Activated CD4-positive, alpha-beta memory T cell treated with anti-CD3 and anti-CD28 coated beads for 36 hours (primary cell): ENCODE measurements at regions of chr12 and their contacts with region 1.

Region 1: GRCh38 chr12:68223083-68223747 is 2.4 kb downstream of the IL26 start:
- DNase-seq: peak; percentile 83
- H3K4me3 Mint-ChIP-seq: no peak overlapping the region
- H3K27ac Mint-ChIP-seq: no peak overlapping the region
- H3K4me1 Mint-ChIP-seq: peaks cover 17% of the 10 kb centered on the region
- H3K27me3 Mint-ChIP-seq: peaks cover 7% of the 10 kb centered on the region

Region 2: GRCh38 chr12:66929121-66929520 is 1294.1 kb before region 1 on chr12:
- CTCF ChIA-PET with region 1: no interaction called
- POLR2A ChIA-PET with region 1: no interaction called
- intact Hi-C with region 1: no loop called
- DNase-seq: peak; percentile 62
- H3K4me3 Mint-ChIP-seq: no peak overlapping the region
- H3K27ac Mint-ChIP-seq: no peak overlapping the region
- H3K4me1 Mint-ChIP-seq: peaks cover 15% of the 10 kb centered on the region
- H3K27me3 Mint-ChIP-seq: peaks cover 8% of the 10 kb centered on the region

Region 3: DNA sequence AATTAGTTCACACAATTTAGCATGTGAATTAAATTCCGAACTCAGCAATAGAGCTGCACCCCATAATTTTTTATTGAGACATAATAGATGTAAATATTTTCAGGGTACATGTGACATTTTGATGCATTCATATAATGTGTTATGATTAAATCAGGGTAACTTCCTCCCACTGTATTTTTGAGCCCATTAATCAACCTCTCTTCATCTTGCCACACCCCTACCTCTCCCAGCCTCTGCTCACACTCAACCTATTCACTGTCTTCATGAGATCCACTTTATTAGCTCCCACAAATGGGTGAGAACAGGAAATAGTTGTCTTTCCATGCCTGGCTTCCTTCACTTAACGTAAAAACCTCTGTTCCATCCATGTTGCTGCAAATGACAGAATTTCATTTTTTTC is 12.3 kb before region 1 on chr12:
- CTCF ChIA-PET with region 1: interaction called, 18 read pairs
- POLR2A ChIA-PET with region 1: no interaction called
- intact Hi-C with region 1: no loop called
- DNase-seq: no peak
- H3K4me3 Mint-ChIP-seq: no peak overlapping the region
- H3K27ac Mint-ChIP-seq: no peak overlapping the region
- H3K4me1 Mint-ChIP-seq: peaks cover 15% of the 10 kb centered on the region
- H3K27me3 Mint-ChIP-seq: peaks cover 5% of the 10 kb centered on the region

Region 4: DNA sequence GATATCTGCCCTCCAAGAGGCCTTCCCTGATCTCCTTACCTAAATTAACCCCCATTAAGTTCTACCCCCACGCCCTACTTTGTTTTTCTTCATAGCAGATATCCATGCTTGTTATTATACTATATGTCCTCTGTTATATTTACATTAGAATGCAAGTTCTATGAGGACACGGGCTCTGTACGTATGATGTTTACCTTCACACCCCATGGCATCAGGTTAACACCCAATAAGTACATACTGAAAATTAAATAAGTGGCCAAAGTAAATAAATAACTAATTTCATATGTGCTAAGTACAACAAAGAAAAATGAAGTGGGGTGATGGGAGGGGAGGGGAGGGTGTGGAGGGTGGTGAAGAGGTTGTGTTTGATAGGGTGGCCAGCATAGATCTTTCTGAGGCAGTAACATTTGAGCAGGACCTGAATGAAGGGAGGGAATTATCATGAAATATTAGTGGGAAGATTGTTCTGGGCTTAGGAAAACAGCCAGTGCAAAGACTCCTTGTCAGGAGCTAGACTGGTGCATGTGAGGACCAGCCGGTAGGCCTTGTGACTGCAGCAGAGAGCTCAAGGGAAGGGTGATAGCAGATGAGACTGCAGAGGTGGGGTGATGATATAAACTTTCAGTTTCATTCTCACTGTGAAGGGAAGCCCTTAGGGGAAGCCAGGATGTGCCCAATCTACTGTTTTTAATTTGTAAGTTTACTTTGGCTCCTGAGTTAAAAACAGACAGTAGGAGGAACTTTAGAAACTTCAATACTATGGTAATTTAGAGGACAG is 17.6 kb after region 1 on chr12:
- CTCF ChIA-PET with region 1: interaction called, 12 read pairs
- POLR2A ChIA-PET with region 1: no interaction called
- intact Hi-C with region 1: no loop called
- DNase-seq: peak; percentile 72
- H3K4me3 Mint-ChIP-seq: no peak overlapping the region
- H3K27ac Mint-ChIP-seq: peak overlapping the region; percentile 13
- H3K4me1 Mint-ChIP-seq: peaks cover 46% of the 10 kb centered on the region
- H3K27me3 Mint-ChIP-seq: peaks cover 12% of the 10 kb centered on the region

Region 5: DNA sequence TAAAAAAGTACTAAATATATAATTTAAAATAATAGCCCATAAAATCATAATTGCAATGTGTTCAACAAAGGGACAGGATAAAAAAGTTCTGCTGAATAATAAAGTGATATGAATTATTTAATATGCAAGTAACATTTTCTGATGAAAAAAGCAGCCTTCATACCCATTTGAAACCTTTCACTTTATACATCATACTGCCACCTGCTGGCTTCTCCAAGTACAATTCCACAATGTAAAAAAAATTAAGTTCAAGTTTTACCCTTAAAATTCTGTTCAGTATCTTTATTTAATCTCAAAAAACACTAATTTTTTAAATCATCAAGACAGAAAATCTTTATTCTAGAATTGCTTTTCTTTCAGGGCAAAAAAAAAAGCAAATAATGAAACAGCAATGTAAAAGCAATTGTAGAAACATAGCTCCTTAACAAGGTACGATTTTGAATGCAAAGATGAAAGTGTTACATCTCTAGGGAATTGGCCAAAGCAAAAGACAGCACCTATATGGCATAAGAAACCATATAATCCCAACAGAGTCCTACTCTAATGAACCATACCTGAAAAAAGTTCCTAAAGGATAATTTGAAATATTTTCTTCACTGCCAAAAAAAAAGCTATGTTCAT is 93.9 kb after region 1 on chr12:
- CTCF ChIA-PET with region 1: interaction called, 174 read pairs
- POLR2A ChIA-PET with region 1: interaction called, 3 read pairs
- intact Hi-C with region 1: loop called (anchors 1 kb)
- DNase-seq: peak; percentile 37
- H3K4me3 Mint-ChIP-seq: no peak overlapping the region
- H3K27ac Mint-ChIP-seq: no peak overlapping the region
- H3K4me1 Mint-ChIP-seq: no peaks in the 10 kb centered on the region
- H3K27me3 Mint-ChIP-seq: no peaks in the 10 kb centered on the region

Region 6: DNA sequence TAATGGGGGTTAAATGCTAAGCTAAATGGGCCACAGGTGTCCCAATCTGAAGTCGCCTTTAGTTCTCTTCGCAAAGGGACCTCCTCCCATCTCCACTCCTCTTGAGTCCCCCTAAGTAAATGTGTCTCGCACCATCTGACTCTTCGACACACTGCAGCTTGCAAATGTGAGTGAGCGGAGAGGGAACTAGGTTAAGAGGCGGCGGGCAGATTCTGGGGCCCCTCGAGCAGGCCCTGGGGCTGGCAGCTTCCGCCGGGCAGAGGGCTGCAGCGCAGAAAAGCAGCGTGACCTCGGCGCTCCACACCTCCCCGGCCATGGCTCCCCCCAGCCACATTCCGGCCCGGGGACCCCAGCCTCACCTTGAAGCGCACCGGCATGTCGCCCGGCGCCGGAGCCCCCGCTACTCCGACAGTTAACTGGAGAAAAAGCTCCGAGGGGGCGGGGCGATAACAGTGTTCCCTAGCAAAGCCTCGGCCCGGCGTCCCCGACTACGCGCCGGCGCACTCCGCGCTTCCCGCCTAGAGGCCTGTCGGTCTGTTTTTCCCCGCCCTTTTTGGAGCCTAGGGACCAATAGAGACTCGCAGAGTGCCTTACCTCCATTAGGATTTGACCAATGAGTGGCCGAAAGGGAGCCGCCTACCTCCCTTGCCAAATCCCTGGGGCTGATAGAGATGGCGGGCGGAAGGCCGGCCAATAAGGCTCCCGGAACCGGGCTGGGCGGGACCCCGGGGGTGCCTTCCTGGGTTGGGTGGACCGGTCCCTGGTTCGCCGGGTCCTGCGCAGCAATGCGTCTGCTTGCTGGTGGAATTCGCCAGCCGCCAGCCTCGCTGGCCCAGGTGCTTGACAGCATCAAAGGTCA is 108.9 kb after region 1 on chr12 and contains the start of gene MDM1:
- CTCF ChIA-PET with region 1: interaction called, 16 read pairs
- POLR2A ChIA-PET with region 1: interaction called, 4 read pairs
- intact Hi-C with region 1: no loop called
- DNase-seq: peak; percentile 97
- H3K4me3 Mint-ChIP-seq: peak within 1 kb of the TSS; percentile 85
- H3K27ac Mint-ChIP-seq: peak within 1 kb of the TSS; percentile 71
- H3K4me1 Mint-ChIP-seq: peaks cover 31% of the 10 kb centered on the region
- H3K27me3 Mint-ChIP-seq: peaks cover 2% of the 10 kb centered on the region
- total RNA-seq, gene MDM1: 13.8 to 15.6 TPM

Region 7: DNA sequence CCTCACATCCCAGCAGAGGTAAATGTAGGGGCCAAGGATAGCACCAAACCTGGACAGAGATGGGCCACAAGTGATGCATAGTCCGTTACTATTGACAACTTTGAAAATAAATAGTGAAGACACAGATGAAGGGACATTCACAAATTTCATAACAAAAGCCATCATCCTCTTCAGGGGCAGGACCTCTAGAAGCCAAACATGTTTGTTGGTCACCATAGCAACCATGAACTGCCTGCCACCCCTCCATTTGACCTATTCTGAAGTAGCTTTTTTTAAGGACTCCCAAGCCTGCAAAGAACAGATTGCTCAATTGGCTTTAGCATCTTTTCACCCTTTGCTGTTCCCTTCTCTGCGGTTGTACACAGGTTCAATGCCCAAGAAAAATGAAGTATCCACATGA is 144.7 kb after region 1 on chr12:
- CTCF ChIA-PET with region 1: no interaction called
- POLR2A ChIA-PET with region 1: no interaction called
- intact Hi-C with region 1: no loop called
- DNase-seq: no peak
- H3K4me3 Mint-ChIP-seq: no peak overlapping the region
- H3K27ac Mint-ChIP-seq: no peak overlapping the region
- H3K4me1 Mint-ChIP-seq: peaks cover 62% of the 10 kb centered on the region
- H3K27me3 Mint-ChIP-seq: no peaks in the 10 kb centered on the region